ENCODE measurements at regions of chr18 and their contacts with region 1.

Region 1: GRCh38 chr18:644395-645004 is 13.0 kb upstream of the TYMS start:
- DNase-seq: peak in 2 of 3 donors; percentile 9 to 19
- H3K4me3 ChIP-seq: no peak overlapping the region
- H3K27ac ChIP-seq: no peak overlapping the region
- H3K4me1 ChIP-seq: no peaks in the 10 kb centered on the region
- H3K27me3 ChIP-seq: no peaks in the 10 kb centered on the region

Region 2: DNA sequence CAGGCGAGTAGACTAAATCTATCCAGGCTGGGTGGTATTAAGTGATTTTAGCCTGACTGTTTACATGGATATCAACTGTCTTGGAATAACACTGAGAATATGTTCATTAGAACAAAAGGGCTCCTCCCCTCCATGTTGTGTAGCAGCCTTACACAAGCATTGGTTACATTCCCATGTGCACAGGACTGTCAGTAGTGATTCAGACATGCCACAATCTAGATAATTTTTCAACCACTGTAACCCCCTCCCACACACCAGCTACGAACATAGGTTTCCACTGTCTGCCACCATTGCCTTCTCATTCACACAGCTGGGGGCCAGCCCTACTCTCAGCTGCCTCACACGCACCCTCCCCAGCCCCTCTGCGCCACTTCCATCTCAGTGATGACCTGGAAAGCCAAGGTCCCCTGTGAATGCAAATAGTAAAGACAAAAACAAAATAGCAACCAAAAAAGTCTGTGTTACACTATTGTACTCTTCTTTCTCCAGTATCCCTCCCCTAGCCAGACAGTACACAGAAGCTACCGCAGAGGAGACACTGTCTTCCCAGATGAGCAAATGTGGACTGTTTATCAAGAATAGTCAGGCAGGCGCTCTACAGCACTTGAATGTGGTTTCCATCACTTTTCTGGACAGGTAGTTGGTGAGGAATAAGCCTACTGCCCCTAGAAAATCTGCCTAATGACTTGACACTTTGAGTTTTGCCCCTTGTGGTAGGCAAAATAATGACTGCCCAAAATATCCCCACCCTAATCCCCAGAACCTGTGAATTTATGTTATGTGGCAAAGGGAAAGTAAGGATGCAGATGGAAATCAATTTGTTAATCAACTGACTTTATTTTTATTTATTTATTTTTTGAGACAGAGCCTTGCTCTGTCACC is 15.0 kb before region 1 on chr18:
- CTCF ChIA-PET with region 1: interaction called, 16 read pairs
- POLR2A ChIA-PET with region 1: no interaction called
- DNase-seq: peak in 2 of 3 donors; percentile 36 to 37
- H3K4me3 ChIP-seq: no peak overlapping the region
- H3K27ac ChIP-seq: no peak overlapping the region
- H3K4me1 ChIP-seq: no peaks in the 10 kb centered on the region
- H3K27me3 ChIP-seq: no peaks in the 10 kb centered on the region

Measured in common myeloid progenitor, CD34-positive (primary cell).